Naive thymus-derived CD8-positive, alpha-beta T cell (primary cell): ENCODE measurements at regions of chr1 and their contacts with region 1.

Region 1: GRCh38 chr1:10430216-10431069 is at the start of gene CENPS:
- DNase-seq: peak; percentile 72 to 95 (median 90)
- ATAC-seq: peak; percentile 86 to 87
- H3K4me3 Mint-ChIP-seq: peak within 1 kb of the TSS; percentile 85 to 95 (median 89)
- H3K27ac Mint-ChIP-seq: peak within 1 kb of the TSS; percentile 79 to 96 (median 92)
- H3K4me1 Mint-ChIP-seq: peaks cover 3 to 31% (median 14%) of the 10 kb centered on the region in 4 donors
- H3K27me3 Mint-ChIP-seq: no peaks in the 10 kb centered on the region
- polyA plus RNA-seq, gene CENPS: 8.6 to 11.2 (median 9.4) TPM

Region 2: GRCh38 chr1:10398734-10399623 is 31.5 kb before region 1 on chr1 and contains the start of gene PGD:
- POLR2A ChIA-PET with region 1: interaction called, 11 read pairs
- DNase-seq: peak; percentile 91 to 98 (median 94)
- ATAC-seq: peak; percentile 93 to 98
- H3K4me3 Mint-ChIP-seq: peak within 1 kb of the TSS; percentile 94 to 98 (median 95)
- H3K27ac Mint-ChIP-seq: peak within 1 kb of the TSS; percentile 72 to 94 (median 87)
- H3K4me1 Mint-ChIP-seq: peaks cover 10 to 26% (median 19%) of the 10 kb centered on the region in 4 donors
- H3K27me3 Mint-ChIP-seq: no peaks in the 10 kb centered on the region
- polyA plus RNA-seq, gene PGD: 41.4 to 52.8 (median 46.6) TPM

Region 3: DNA sequence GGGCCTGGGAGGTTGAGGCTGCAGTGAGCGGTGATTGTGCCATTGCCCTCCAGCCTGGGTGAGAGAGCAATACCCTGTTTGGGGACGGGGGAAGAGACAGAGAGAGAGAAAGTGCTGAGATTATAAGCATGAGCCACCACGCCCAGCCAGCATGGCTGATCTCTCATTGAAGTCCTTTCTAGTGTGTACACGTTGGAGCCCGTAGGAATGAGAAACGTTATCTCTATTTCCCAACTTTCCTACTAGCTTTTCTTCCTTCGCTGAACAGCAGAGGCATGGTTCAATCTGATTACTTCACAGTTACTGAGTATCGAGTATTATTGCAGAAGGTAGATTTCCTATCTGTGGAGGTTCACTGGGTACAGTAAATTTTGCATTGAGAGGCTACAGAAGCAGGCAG is 48.9 kb after region 1 on chr1:
- POLR2A ChIA-PET with region 1: no interaction called
- DNase-seq: no peak
- ATAC-seq: no peak
- H3K4me3 Mint-ChIP-seq: no peak overlapping the region
- H3K27ac Mint-ChIP-seq: no peak overlapping the region
- H3K4me1 Mint-ChIP-seq: peaks cover 13 to 50% (median 31%) of the 10 kb centered on the region in 4 donors
- H3K27me3 Mint-ChIP-seq: no peaks in the 10 kb centered on the region